ENCODE measurements at regions of chr19 and their contacts with region 1.

Region 1: GRCh38 chr19:10502524-10503001 is 593 bp downstream of the KEAP1 start:
- DNase-seq: peak; percentile 96
- H3K4me3 ChIP-seq: peak overlapping the region; percentile 79 to 100 (median 94)
- H3K27ac ChIP-seq: peak overlapping the region; percentile 97 to 99 (median 98)
- H3K4me1 ChIP-seq: peaks cover 27 to 58% (median 57%) of the 10 kb centered on the region in 4 donors
- H3K27me3 ChIP-seq: no peaks in the 10 kb centered on the region
- CTCF ChIP-seq: peak in 2 of 3 experiments; percentile 3 to 22
- EP300 ChIP-seq: no peak
- POLR2A ChIP-seq: peak; percentile 30

Region 2: DNA sequence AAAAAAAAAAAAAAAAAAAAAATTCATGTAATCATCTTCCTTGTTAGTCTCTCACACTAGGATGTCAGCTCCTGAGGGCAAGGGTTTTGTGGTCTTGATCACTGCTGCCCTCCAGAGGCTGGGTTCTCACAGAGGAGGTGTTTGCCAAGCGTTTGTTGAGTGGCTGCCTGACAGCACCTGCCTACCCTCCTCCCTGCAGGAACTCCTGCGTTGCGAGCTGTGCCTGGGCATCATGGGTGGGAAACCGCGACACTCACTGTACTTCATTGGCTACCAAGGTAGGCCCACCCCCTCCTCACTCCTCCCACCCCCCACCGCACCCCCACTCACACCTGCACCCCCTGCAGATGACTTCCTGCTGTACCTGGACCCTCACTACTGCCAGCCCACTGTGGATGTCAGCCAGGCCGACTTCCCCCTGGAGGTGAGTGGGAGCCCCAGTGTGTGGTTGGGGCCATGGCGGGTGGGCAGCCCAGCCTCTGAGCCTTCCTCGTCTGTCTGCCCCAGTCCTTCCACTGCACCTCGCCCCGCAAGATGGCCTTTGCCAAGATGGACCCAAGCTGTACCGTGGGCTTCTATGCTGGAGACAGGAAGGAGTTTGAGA is 49.2 kb after region 1 on chr19:
- intact Hi-C with region 1: loop called (anchors 5 kb)
- DNase-seq: no peak
- H3K4me3 ChIP-seq: no peak overlapping the region
- H3K27ac ChIP-seq: no peak overlapping the region
- H3K4me1 ChIP-seq: peaks cover 0 to 4% (median under 1%) of the 10 kb centered on the region in 4 donors
- H3K27me3 ChIP-seq: no peaks in the 10 kb centered on the region
- CTCF ChIP-seq: no peak
- EP300 ChIP-seq: no peak
- POLR2A ChIP-seq: no peak

Region 3: GRCh38 chr19:10565567-10566407 is 63.2 kb after region 1 on chr19 and contains the start of gene KRI1:
- intact Hi-C with region 1: loop called (anchors 5 kb)
- DNase-seq: peak; percentile 100
- H3K4me3 ChIP-seq: peak within 1 kb of the TSS; percentile 81 to 95 (median 90)
- H3K27ac ChIP-seq: peak within 1 kb of the TSS; percentile 87 to 94 (median 90)
- H3K4me1 ChIP-seq: peaks cover 36 to 49% (median 45%) of the 10 kb centered on the region in 4 donors
- H3K27me3 ChIP-seq: no peaks in the 10 kb centered on the region
- CTCF ChIP-seq: peak in 1 of 3 experiments; percentile 40
- EP300 ChIP-seq: peak; percentile 68
- POLR2A ChIP-seq: peak; percentile 70
- total RNA-seq, gene KRI1: 13.7 to 23.9 (median 16.0) TPM

Measured in esophagus muscularis mucosa (tissue), 4 donors.